MCF 10A (cell line): ENCODE measurements at regions of chr5 and their contacts with region 1.

Region 1: GRCh38 chr5:168047043-168047668 is 244.3 kb upstream of the WWC1 start:
- DNase-seq: peak; percentile 89
- H3K4me3 Mint-ChIP-seq: no peak overlapping the region
- H3K27ac Mint-ChIP-seq: no peak overlapping the region
- H3K4me1 Mint-ChIP-seq: peaks cover 11% of the 10 kb centered on the region
- H3K27me3 Mint-ChIP-seq: peaks cover 34% of the 10 kb centered on the region
- CTCF ChIP-seq: peak; percentile 88

Region 2: GRCh38 chr5:167582283-167582682 is 464.9 kb before region 1 on chr5:
- CTCF ChIA-PET with region 1: interaction called, 90 read pairs
- POLR2A ChIA-PET with region 1: interaction called, 3 read pairs
- intact Hi-C with region 1: loop called (anchors 1 kb)
- DNase-seq: peak; percentile 52
- H3K4me3 Mint-ChIP-seq: no peak overlapping the region
- H3K27ac Mint-ChIP-seq: no peak overlapping the region
- H3K4me1 Mint-ChIP-seq: peaks cover 2% of the 10 kb centered on the region
- H3K27me3 Mint-ChIP-seq: peaks cover 33% of the 10 kb centered on the region
- CTCF ChIP-seq: peak; percentile 68

Region 3: GRCh38 chr5:167699434-167699833 is 347.7 kb before region 1 on chr5:
- CTCF ChIA-PET with region 1: interaction called, 11 read pairs
- POLR2A ChIA-PET with region 1: no interaction called
- intact Hi-C with region 1: no loop called
- DNase-seq: peak; percentile 98
- H3K4me3 Mint-ChIP-seq: peak overlapping the region; percentile 42
- H3K27ac Mint-ChIP-seq: peak overlapping the region; percentile 98
- H3K4me1 Mint-ChIP-seq: peaks cover 36% of the 10 kb centered on the region
- H3K27me3 Mint-ChIP-seq: no peaks in the 10 kb centered on the region
- CTCF ChIP-seq: no peak

Region 4: GRCh38 chr5:167730121-167730520 is 317.0 kb before region 1 on chr5:
- CTCF ChIA-PET with region 1: interaction called, 25 read pairs
- POLR2A ChIA-PET with region 1: interaction called, 4 read pairs
- intact Hi-C with region 1: no loop called
- DNase-seq: peak; percentile 94
- H3K4me3 Mint-ChIP-seq: no peak overlapping the region
- H3K27ac Mint-ChIP-seq: peak overlapping the region; percentile 32
- H3K4me1 Mint-ChIP-seq: peaks cover 15% of the 10 kb centered on the region
- H3K27me3 Mint-ChIP-seq: no peaks in the 10 kb centered on the region
- CTCF ChIP-seq: no peak

Region 5: GRCh38 chr5:168027007-168027406 is 20.1 kb before region 1 on chr5:
- CTCF ChIA-PET with region 1: interaction called, 56 read pairs
- POLR2A ChIA-PET with region 1: interaction called, 3 read pairs
- intact Hi-C with region 1: no loop called
- DNase-seq: no peak
- H3K4me3 Mint-ChIP-seq: no peak overlapping the region
- H3K27ac Mint-ChIP-seq: no peak overlapping the region
- H3K4me1 Mint-ChIP-seq: no peaks in the 10 kb centered on the region
- H3K27me3 Mint-ChIP-seq: peaks cover 16% of the 10 kb centered on the region
- CTCF ChIP-seq: no peak

Region 6: GRCh38 chr5:168064933-168065622 is 17.9 kb after region 1 on chr5:
- CTCF ChIA-PET with region 1: interaction called, 18 read pairs
- POLR2A ChIA-PET with region 1: no interaction called
- intact Hi-C with region 1: no loop called
- DNase-seq: no peak
- H3K4me3 Mint-ChIP-seq: peak overlapping the region; percentile 46
- H3K27ac Mint-ChIP-seq: no peak overlapping the region
- H3K4me1 Mint-ChIP-seq: peaks cover 10% of the 10 kb centered on the region
- H3K27me3 Mint-ChIP-seq: no peaks in the 10 kb centered on the region
- CTCF ChIP-seq: no peak